Esophagus muscularis mucosa (tissue), 4 donors: ENCODE measurements at regions of chr1 and their contacts with region 1.

Region 1: DNA sequence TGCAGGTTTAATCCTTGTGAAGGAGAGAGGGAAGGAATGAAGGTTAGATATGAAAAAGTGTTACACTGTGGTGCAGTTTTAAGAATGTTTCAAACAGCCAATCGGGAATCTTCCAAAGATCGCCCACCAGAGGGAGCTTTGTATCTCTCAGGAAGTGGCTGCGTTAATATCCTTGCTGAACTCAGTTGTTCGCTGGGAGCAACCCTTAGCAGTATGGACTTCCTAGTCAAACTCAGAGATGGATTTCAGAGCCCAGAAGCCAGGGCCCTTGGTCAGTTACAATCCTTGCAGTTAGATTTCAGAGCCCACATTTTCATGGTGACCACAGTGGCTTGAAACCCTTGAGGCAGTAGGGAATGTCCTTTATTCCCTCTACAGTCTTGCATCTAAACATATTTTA is 136.2 kb downstream of the NTNG1 start:
- DNase-seq: no peak
- H3K4me3 ChIP-seq: no peak overlapping the region
- H3K27ac ChIP-seq: no peak overlapping the region
- H3K4me1 ChIP-seq: no peaks in the 10 kb centered on the region
- H3K27me3 ChIP-seq: no peaks in the 10 kb centered on the region
- CTCF ChIP-seq: peak; percentile 44 to 52 (median 49)
- EP300 ChIP-seq: no peak
- POLR2A ChIP-seq: no peak

Region 2: GRCh38 chr1:107529502-107530149 is 252.6 kb after region 1 on chr1:
- intact Hi-C with region 1: loop called (anchors 10 kb)
- DNase-seq: no peak
- H3K4me3 ChIP-seq: no peak overlapping the region
- H3K27ac ChIP-seq: no peak overlapping the region
- H3K4me1 ChIP-seq: peaks cover 0 to 27% (median 2%) of the 10 kb centered on the region in 4 donors
- H3K27me3 ChIP-seq: no peaks in the 10 kb centered on the region
- CTCF ChIP-seq: peak; percentile 66 to 74 (median 66)
- EP300 ChIP-seq: no peak
- POLR2A ChIP-seq: no peak